ENCODE measurements at regions of chr9 and their contacts with region 1.

Region 1: DNA sequence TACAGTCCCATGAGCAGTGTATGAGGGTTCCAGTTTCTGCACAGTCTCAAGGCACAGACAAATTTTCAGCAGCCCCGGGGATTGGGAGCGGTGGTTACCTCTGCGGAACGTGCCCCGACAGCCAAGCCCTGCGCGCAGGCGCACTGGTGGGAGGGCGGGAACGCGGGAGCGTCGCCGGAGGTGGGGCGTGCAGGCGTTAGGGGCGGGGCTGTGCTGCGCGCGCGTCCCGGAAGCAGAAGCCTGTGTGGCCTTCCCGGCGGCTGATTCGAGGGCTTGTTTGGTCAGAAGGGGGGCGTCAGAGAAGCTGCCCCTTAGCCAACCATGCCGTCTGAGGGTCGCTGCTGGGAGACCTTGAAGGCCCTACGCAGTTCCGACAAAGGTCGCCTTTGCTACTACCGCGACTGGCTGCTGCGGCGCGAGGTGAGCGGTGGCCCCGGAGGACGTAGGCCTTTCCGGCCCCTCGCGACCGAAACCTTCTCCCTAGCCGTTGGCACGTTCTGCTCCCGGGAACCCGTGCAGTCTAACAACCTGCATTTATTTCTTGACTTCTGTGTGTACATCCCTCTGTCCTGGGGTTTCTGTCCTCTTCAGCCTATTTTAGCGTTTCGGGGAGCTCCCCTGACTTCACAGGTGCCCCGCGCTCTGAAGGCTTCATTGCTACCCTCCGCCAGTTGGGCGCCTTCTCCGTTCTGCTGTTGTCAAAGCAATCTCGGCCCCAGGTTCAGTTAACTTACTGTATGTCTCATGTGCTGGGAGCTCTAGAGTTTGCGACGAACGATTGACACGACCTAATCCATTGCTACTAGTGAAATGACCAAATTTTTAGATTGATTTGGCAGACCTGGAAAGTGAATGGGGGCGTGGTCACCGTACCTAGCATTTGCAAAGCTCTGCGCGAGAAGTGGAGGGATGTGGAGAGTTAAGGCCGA is at the start of gene GLE1:
- DNase-seq: peak; percentile 94 to 99 (median 97)
- H3K4me3 ChIP-seq: peak within 1 kb of the TSS; percentile 88
- H3K4me3 Mint-ChIP-seq: peak within 1 kb of the TSS; percentile 97 to 100 (median 99)
- H3K27ac ChIP-seq: peak within 1 kb of the TSS; percentile 86
- H3K27ac Mint-ChIP-seq: peak within 1 kb of the TSS; percentile 88 to 99 (median 99)
- H3K4me1 ChIP-seq: peaks cover 24% of the 10 kb centered on the region
- H3K4me1 Mint-ChIP-seq: peaks cover 30 to 43% (median 38%) of the 10 kb centered on the region in 3 donors
- H3K27me3 ChIP-seq: no peaks in the 10 kb centered on the region
- H3K27me3 Mint-ChIP-seq: no peaks in the 10 kb centered on the region
- total RNA-seq, gene GLE1: 48.7 to 51.9 TPM

Region 2: DNA sequence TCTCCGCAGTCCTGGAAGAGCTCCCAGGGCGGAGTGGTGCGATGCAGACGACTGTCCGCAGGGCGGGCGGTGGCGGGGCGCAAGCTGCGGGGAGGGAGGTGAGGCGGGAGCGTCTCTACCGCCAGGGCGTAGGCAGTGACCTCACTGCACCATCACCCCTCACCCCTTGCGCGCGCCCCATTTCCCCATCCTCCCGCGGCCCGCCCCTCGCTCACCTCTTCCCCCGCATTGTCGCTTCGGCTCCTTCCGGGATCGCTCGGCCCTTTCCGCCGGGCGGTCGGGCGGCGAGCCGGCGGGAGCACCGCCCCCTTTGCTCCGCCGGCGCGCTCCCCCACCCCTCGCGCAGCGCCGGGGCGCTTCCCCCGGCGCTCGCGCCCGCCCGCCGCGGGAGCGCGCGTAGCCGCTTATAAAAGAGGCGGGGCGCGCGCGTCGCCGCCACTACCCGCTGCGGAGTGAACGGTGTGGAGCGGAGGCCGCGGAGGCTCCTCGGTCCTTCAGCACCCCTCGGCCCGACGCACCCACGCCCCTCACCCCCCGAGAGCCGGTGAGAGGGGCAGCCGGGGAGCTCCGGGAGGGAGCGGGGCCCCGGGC is 47.5 kb after region 1 on chr9 and contains the start of gene SPTAN1:
- CTCF ChIA-PET with region 1: interaction called, 4 read pairs
- POLR2A ChIA-PET with region 1: interaction called, 12 read pairs
- DNase-seq: peak; percentile 95 to 97 (median 96)
- H3K4me3 ChIP-seq: peak within 1 kb of the TSS; percentile 76
- H3K4me3 Mint-ChIP-seq: peak within 1 kb of the TSS in 6 of 7 donors; percentile 90 to 98 (median 94)
- H3K27ac ChIP-seq: peak within 1 kb of the TSS; percentile 84
- H3K27ac Mint-ChIP-seq: peak within 1 kb of the TSS in 7 of 8 donors; percentile 96 to 100 (median 99)
- H3K4me1 ChIP-seq: peaks cover 64% of the 10 kb centered on the region
- H3K4me1 Mint-ChIP-seq: peaks cover 21 to 37% (median 31%) of the 10 kb centered on the region in 3 donors
- H3K27me3 ChIP-seq: no peaks in the 10 kb centered on the region
- H3K27me3 Mint-ChIP-seq: peaks cover 0 to 2% of the 10 kb centered on the region in 2 donors
- total RNA-seq, gene SPTAN1: 195 to 203 TPM

Measured in CD8-positive, alpha-beta memory T cell (primary cell).